ENCODE measurements at regions of chr16 and their contacts with region 1.

Region 1: DNA sequence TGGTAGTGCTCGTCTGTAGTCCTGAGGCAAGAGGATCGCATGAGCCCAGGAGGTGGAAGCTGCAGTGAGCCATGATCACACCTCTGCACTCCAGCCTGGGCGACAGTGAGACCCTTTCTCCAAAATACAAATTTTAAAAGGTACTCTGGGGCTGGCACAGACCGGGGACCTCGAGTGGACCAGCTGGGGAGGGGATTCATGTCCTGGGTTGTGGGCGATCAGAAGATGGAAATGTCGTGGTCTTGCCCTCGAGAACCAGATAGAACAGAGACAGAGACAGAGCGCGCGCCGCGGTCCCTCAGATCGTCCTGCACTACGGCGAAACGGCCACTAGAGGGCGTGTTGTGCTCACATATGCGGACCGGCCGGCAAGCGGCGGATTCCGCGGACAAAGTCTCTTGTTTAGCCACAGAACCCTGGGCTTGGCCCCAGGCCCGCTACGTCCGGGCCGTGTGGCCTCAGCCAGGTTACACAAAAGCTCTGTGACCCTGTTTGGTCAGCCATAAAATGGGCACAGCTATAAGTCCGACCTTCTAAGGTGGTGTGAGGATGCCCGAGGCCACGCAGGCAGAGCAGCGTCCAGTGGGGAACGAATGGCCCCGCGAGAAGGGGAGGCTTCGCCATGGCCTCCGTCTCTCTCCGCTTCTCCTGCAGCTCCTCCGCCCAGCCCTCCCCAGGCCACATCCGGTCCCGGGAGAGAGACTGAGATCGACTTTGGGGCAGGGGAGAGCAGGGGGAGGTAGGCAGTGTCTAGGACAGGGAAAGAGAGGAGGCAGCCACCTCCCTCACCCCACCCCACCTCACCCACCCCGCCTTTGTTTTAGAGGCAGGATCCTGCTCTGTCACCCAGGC is 14.6 kb upstream of the SBK1 start:
- DNase-seq: peak; percentile 70 to 88 (median 82)
- ATAC-seq: peak; percentile 95
- H3K4me3 ChIP-seq: peak overlapping the region; percentile 82
- H3K4me3 Mint-ChIP-seq: peak overlapping the region; percentile 75 to 86 (median 84)
- H3K27ac ChIP-seq: peak overlapping the region; percentile 73
- H3K27ac Mint-ChIP-seq: peak overlapping the region; percentile 88 to 99 (median 94)
- H3K4me1 ChIP-seq: peaks cover 21 to 30% of the 10 kb centered on the region in 2 donors
- H3K4me1 Mint-ChIP-seq: peaks cover 31 to 61% (median 44%) of the 10 kb centered on the region in 7 donors
- H3K27me3 ChIP-seq: no peaks in the 10 kb centered on the region
- H3K27me3 Mint-ChIP-seq: peaks cover 0 to 30% (median 0%) of the 10 kb centered on the region in 5 donors

Region 2: DNA sequence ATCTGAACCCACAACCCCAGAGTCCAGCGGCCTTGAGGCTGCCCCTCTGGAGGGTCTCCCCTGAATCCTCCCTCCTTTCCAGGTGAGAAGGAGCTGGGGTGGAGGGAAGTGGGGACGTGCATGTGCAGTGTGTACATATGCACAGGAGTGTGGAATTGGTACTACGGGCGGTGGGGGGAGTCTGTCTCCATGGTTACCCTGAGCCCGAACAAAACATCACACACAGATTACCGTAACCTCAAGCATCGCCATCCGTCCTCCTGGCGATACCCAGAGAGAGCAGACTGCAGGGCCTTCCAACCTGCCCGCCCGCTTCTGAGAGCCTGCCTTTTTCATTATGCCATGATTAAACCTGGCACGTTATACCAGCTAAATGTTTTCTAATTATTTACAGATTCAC is 239.4 kb before region 1 on chr16:
- CTCF ChIA-PET with region 1: no interaction called
- POLR2A ChIA-PET with region 1: no interaction called
- intact Hi-C with region 1: no loop called
- DNase-seq: no peak
- ATAC-seq: no peak
- H3K4me3 ChIP-seq: no peak overlapping the region
- H3K4me3 Mint-ChIP-seq: no peak overlapping the region
- H3K27ac ChIP-seq: no peak overlapping the region
- H3K27ac Mint-ChIP-seq: no peak overlapping the region
- H3K4me1 ChIP-seq: no peaks in the 10 kb centered on the region
- H3K4me1 Mint-ChIP-seq: no peaks in the 10 kb centered on the region
- H3K27me3 ChIP-seq: no peaks in the 10 kb centered on the region
- H3K27me3 Mint-ChIP-seq: peaks cover 0 to 37% (median 22%) of the 10 kb centered on the region in 5 donors

Region 3: DNA sequence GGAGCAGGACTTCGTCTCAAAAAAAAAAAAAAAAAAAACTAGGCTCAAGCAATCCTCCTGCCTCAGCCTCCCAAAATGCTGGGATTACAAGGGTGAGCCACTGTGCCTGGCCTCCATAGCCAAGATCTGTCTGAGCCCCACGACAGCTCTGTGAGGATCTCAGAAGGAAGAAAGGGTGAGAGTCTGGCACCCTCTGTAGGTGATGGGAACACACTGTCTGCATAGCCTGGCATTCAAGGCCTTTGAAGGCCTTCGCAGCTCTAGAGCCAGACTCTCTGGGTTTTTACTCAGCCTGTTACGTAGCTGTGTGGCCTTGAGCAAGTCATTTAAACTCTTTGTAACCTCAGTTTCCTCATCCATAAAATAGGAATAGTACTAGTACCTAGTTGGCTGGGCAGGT is 59.7 kb before region 1 on chr16:
- CTCF ChIA-PET with region 1: interaction called, 11 read pairs
- POLR2A ChIA-PET with region 1: interaction called, 25 read pairs
- intact Hi-C with region 1: no loop called
- DNase-seq: peak in 8 of 9 donors; percentile 41 to 82 (median 72)
- ATAC-seq: peak; percentile 99
- H3K4me3 ChIP-seq: no peak overlapping the region
- H3K4me3 Mint-ChIP-seq: no peak overlapping the region
- H3K27ac ChIP-seq: no peak overlapping the region
- H3K27ac Mint-ChIP-seq: peak overlapping the region in 8 of 9 donors; percentile 13 to 84 (median 66)
- H3K4me1 ChIP-seq: peaks cover 0 to 5% of the 10 kb centered on the region in 2 donors
- H3K4me1 Mint-ChIP-seq: peaks cover 0 to 9% (median 6%) of the 10 kb centered on the region in 7 donors
- H3K27me3 ChIP-seq: no peaks in the 10 kb centered on the region
- H3K27me3 Mint-ChIP-seq: no peaks in the 10 kb centered on the region

Region 4: GRCh38 chr16:28291873-28292660 is 14.3 kb after region 1 on chr16 and contains the start of gene SBK1:
- CTCF ChIA-PET with region 1: interaction called, 8 read pairs
- POLR2A ChIA-PET with region 1: interaction called, 13 read pairs
- intact Hi-C with region 1: loop called (anchors 1 to 2 kb)
- DNase-seq: peak; percentile 75 to 90 (median 87)
- ATAC-seq: peak; percentile 97
- H3K4me3 ChIP-seq: peak within 1 kb of the TSS; percentile 94
- H3K4me3 Mint-ChIP-seq: peak within 1 kb of the TSS; percentile 93 to 97 (median 96)
- H3K27ac ChIP-seq: peak within 1 kb of the TSS; percentile 87
- H3K27ac Mint-ChIP-seq: peak within 1 kb of the TSS; percentile 78 to 96 (median 88)
- H3K4me1 ChIP-seq: peaks cover 49 to 59% of the 10 kb centered on the region in 2 donors
- H3K4me1 Mint-ChIP-seq: peaks cover 49 to 76% (median 69%) of the 10 kb centered on the region in 7 donors
- H3K27me3 ChIP-seq: no peaks in the 10 kb centered on the region
- H3K27me3 Mint-ChIP-seq: peaks cover 0 to 27% (median 0%) of the 10 kb centered on the region in 5 donors
- total RNA-seq, gene SBK1: 6.0 to 19.9 (median 17.9) TPM

Region 5: DNA sequence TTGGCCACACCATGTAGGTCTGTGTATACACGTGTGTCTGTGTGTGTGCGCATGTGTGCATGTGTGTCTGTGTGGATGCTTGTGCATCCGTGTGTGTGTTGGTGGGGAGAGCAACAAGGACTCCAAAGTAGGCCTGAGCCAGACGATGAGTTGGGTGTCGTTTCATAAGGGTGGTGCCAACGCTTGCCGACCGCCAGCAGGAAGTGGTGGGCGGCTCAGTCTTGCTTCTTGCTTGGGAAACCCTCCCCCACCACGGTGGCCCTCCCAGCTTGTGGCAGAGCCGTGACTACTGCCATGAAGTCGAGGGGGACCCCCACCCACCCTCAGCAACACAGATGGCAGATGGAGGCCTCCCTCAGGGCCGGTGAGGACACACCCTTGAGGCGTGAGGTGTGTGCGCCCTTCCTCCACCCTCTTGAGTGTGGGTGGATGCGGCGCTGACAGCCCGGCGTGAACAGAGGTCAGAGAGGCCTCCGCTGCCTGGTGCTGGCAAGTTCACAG is 32.1 kb after region 1 on chr16:
- CTCF ChIA-PET with region 1: interaction called, 74 read pairs
- POLR2A ChIA-PET with region 1: interaction called, 174 read pairs
- intact Hi-C with region 1: loop called in 1 of 2 experiments (anchors 1 kb)
- DNase-seq: peak; percentile 62 to 91 (median 88)
- ATAC-seq: peak; percentile 94
- H3K4me3 ChIP-seq: peak overlapping the region; percentile 59
- H3K4me3 Mint-ChIP-seq: peak overlapping the region; percentile 66 to 87 (median 76)
- H3K27ac ChIP-seq: peak overlapping the region; percentile 77
- H3K27ac Mint-ChIP-seq: peak overlapping the region; percentile 81 to 99 (median 97)
- H3K4me1 ChIP-seq: peaks cover 44 to 49% of the 10 kb centered on the region in 2 donors
- H3K4me1 Mint-ChIP-seq: peaks cover 29 to 91% (median 73%) of the 10 kb centered on the region in 7 donors
- H3K27me3 ChIP-seq: no peaks in the 10 kb centered on the region
- H3K27me3 Mint-ChIP-seq: no peaks in the 10 kb centered on the region

Region 6: DNA sequence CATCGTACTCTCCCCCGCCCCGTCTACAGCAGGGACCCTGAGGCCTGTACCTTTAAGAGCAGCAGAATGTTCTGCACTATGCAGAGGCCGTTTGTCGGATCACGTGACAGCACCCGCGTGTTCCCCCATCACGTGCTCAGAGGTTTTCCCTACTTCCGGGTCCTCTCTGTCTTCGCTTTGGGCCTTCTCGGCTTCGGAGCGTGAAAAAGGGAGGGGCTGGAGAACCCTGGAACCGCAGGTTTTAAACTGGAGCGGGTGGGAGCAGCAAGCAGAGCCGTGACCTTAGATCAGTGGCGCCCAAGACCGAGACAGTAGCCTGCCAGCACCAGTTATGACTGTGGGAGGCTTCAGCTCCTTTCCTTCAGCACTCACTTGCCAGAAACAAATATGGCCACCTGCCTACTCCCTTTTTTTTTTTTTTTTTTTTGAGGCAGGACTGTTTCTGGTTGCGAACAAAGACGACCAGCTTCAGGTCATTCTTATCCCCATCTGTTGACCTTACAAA is 214.3 kb after region 1 on chr16 and contains the start of gene CLN3:
- CTCF ChIA-PET with region 1: interaction called, 3 read pairs
- POLR2A ChIA-PET with region 1: interaction called, 3 read pairs
- intact Hi-C with region 1: loop called in 1 of 2 experiments (anchors 1 kb)
- DNase-seq: peak; percentile 73 to 95 (median 93)
- ATAC-seq: peak; percentile 78
- H3K4me3 ChIP-seq: peak within 1 kb of the TSS; percentile 98
- H3K4me3 Mint-ChIP-seq: peak within 1 kb of the TSS; percentile 95 to 100 (median 98)
- H3K27ac ChIP-seq: peak within 1 kb of the TSS; percentile 95
- H3K27ac Mint-ChIP-seq: peak within 1 kb of the TSS; percentile 99 to 100 (median 100)
- H3K4me1 ChIP-seq: peaks cover 31 to 40% of the 10 kb centered on the region in 2 donors
- H3K4me1 Mint-ChIP-seq: peaks cover 41 to 77% (median 62%) of the 10 kb centered on the region in 7 donors
- H3K27me3 ChIP-seq: no peaks in the 10 kb centered on the region
- H3K27me3 Mint-ChIP-seq: no peaks in the 10 kb centered on the region
- total RNA-seq, gene CLN3: 56.5 to 76.3 (median 70.7) TPM